Activated CD4-positive, alpha-beta T cell treated with anti-CD3 and anti-CD28 coated beads, Interleukin-2, amount 10 ng/mL, durations not matched to agents 24 days and 14 days (primary cell): ENCODE measurements at regions of chr12 and their contacts with region 1.

Region 1: GRCh38 chr12:100566887-100567637 is 6.4 kb upstream of the GAS2L3 start:
- DNase-seq: no peak
- H3K4me3 Mint-ChIP-seq: no peak overlapping the region
- H3K27ac Mint-ChIP-seq: no peak overlapping the region
- H3K4me1 Mint-ChIP-seq: peaks cover 6% of the 10 kb centered on the region
- H3K27me3 Mint-ChIP-seq: peaks cover 38% of the 10 kb centered on the region

Region 2: GRCh38 chr12:100348657-100349454 is 218.2 kb before region 1 on chr12:
- intact Hi-C with region 1: loop called (anchors 10 kb)
- DNase-seq: peak; percentile 30
- H3K4me3 Mint-ChIP-seq: no peak overlapping the region
- H3K27ac Mint-ChIP-seq: no peak overlapping the region
- H3K4me1 Mint-ChIP-seq: no peaks in the 10 kb centered on the region
- H3K27me3 Mint-ChIP-seq: peaks cover 21% of the 10 kb centered on the region